CD8-positive, alpha-beta T cell (primary cell): ENCODE measurements at regions of chr7 and their contacts with region 1.

Region 1: GRCh38 chr7:98976396-98977185 is 98.3 kb downstream of the TRRAP start:
- DNase-seq: no peak
- ATAC-seq: no peak
- H3K4me3 ChIP-seq: no peak overlapping the region
- H3K4me3 Mint-ChIP-seq: no peak overlapping the region
- H3K27ac ChIP-seq: no peak overlapping the region
- H3K27ac Mint-ChIP-seq: no peak overlapping the region
- H3K4me1 ChIP-seq: no peaks in the 10 kb centered on the region
- H3K4me1 Mint-ChIP-seq: no peaks in the 10 kb centered on the region
- H3K27me3 ChIP-seq: no peaks in the 10 kb centered on the region
- H3K27me3 Mint-ChIP-seq: no peaks in the 10 kb centered on the region
- CTCF ChIP-seq: no peak

Region 2: GRCh38 chr7:99033765-99034164 is 57.2 kb after region 1 on chr7:
- CTCF ChIA-PET with region 1: no interaction called
- POLR2A ChIA-PET with region 1: no interaction called
- intact Hi-C with region 1: loop called in 1 of 2 experiments (anchors 2 kb)
- DNase-seq: no peak
- ATAC-seq: no peak
- H3K4me3 ChIP-seq: no peak overlapping the region
- H3K4me3 Mint-ChIP-seq: no peak overlapping the region
- H3K27ac ChIP-seq: no peak overlapping the region
- H3K27ac Mint-ChIP-seq: no peak overlapping the region
- H3K4me1 ChIP-seq: no peaks in the 10 kb centered on the region
- H3K4me1 Mint-ChIP-seq: no peaks in the 10 kb centered on the region
- H3K27me3 ChIP-seq: no peaks in the 10 kb centered on the region
- H3K27me3 Mint-ChIP-seq: no peaks in the 10 kb centered on the region
- CTCF ChIP-seq: no peak

Region 3: DNA sequence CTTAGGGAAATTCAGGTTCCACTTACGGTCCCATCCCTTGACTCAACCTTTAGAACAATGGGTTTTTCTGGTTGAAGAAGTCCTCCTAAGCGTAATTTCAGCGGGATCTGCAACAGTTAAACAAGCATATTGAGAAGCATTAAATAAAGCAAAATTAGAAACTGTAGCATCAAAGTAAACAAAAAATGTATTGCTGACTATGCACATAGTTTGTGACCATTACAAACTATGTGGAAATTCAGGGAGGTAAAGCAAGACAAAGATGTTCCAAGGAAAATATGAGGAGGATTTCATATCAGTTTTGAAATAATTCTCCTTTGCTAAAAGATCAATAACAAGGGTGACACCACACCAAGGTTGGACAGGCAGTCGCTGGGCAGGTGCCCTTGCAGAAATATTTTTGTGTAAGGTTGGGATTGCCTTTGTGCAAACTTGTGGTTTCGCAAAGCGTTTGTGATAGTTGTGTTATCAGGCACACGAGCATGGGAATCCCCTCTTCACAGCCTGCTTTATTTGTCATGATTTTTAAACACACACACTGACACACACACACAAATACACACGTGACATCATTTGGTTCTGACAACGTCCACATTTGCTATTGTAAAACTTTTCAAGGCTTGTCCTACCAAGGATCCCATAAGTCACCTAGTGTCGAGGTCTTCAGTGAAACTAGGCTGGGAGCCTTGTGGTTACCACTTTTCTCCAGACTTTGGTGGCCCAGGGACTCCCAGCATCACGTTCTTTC is 708.7 kb after region 1 on chr7:
- CTCF ChIA-PET with region 1: no interaction called
- POLR2A ChIA-PET with region 1: no interaction called
- intact Hi-C with region 1: no loop called
- DNase-seq: no peak
- ATAC-seq: no peak
- H3K4me3 ChIP-seq: no peak overlapping the region
- H3K4me3 Mint-ChIP-seq: no peak overlapping the region
- H3K27ac ChIP-seq: no peak overlapping the region
- H3K27ac Mint-ChIP-seq: no peak overlapping the region
- H3K4me1 ChIP-seq: no peaks in the 10 kb centered on the region
- H3K4me1 Mint-ChIP-seq: no peaks in the 10 kb centered on the region
- H3K27me3 ChIP-seq: no peaks in the 10 kb centered on the region
- H3K27me3 Mint-ChIP-seq: no peaks in the 10 kb centered on the region
- CTCF ChIP-seq: no peak